Activated B cell treated with CpG ODN at 0.5 μM for 24 hours (primary cell): ENCODE measurements at regions of chr1 and their contacts with region 1.

Region 1: DNA sequence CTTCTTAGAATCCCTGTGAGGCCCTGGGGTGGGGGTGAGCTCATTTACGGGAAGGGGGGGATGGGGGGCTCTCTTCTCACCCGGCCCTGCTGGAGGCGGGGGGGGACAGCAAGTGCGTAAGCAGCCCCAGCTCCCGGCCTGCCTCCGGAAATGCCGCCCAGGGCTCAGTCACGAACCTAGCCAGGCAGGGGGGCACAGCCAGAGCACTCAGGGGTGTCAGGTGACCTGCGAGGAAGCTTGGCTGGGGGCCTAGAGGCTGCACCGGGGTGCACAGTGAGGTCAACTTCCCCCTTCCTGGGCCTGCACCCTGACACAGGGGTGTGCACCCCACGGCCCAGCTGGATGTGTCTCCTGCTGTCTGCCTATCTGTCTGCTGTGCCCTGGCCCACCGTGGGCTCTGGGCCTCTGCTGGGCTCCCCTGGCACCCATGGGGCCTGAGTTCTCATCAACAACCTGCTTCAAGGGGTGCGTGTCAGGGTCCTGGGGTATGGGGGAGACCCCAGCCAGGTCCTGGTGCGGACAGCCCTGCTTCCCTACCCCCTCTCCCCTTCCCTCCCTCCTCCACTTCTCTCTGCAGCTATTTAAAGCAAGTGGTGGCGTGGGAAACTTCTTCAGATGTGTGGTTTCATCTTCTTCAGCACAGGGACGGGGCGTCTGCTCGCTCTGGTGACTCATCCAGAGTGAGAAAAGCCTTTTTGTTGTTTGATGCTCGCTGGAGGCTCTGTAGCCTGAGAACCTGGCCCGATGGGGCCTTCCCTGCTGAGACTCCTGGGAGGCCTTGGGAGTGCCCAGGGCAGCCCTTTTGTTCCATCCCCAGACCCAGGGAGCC is 92.5 kb upstream of the RUNX3 start:
- DNase-seq: peak; percentile 84
- ATAC-seq: peak; percentile 79
- H3K4me3 Mint-ChIP-seq: peak overlapping the region; percentile 52
- H3K27ac Mint-ChIP-seq: peak overlapping the region; percentile 91
- H3K4me1 Mint-ChIP-seq: peaks cover 71% of the 10 kb centered on the region
- H3K27me3 Mint-ChIP-seq: no peaks in the 10 kb centered on the region
- CTCF ChIP-seq: no peak

Region 2: GRCh38 chr1:24955161-24955560 is 67.4 kb before region 1 on chr1:
- CTCF ChIA-PET with region 1: interaction called, 3 read pairs
- POLR2A ChIA-PET with region 1: interaction called, 47 read pairs
- intact Hi-C with region 1: loop called (anchors 1 kb)
- DNase-seq: no peak
- ATAC-seq: peak; percentile 76
- H3K4me3 Mint-ChIP-seq: peak overlapping the region; percentile 78
- H3K27ac Mint-ChIP-seq: peak overlapping the region; percentile 87
- H3K4me1 Mint-ChIP-seq: peaks cover 87% of the 10 kb centered on the region
- H3K27me3 Mint-ChIP-seq: no peaks in the 10 kb centered on the region
- CTCF ChIP-seq: no peak

Region 3: DNA sequence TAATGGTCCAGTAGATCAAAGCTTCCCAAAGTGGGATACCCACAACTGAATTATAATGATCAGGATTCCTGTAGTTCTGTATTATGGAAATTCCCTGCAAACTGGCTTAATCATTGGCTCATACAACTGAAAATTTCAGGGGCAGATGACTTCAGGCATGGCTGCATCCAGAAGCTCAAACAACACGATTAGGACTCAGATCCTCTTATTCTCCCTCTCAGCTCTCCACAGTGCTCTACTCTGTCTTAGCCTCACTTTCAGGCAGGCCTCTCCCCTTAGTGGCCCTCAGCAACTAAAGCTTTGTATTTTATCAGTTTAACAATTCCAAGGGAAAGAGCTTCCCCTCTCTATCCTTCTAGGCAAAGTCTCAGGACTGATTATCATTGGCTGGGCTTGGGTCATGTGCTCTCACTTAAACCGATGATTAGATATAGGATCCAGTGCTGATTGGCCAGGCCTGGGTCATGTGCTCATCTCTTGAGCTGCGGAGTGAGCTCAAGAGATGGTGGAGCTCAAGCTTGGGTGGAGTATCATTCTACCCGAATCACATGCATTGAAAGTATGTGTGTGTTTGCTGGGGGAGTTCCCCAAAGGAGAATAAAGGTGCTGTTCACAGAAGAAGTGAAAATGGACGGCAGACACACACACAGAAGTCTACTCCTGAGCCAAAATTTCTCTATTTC is 34.6 kb before region 1 on chr1:
- CTCF ChIA-PET with region 1: interaction called, 3 read pairs
- POLR2A ChIA-PET with region 1: interaction called, 22 read pairs
- intact Hi-C with region 1: loop called (anchors 1 kb)
- DNase-seq: no peak
- ATAC-seq: peak; percentile 92
- H3K4me3 Mint-ChIP-seq: peak overlapping the region; percentile 61
- H3K27ac Mint-ChIP-seq: peak overlapping the region; percentile 85
- H3K4me1 Mint-ChIP-seq: peaks cover 34% of the 10 kb centered on the region
- H3K27me3 Mint-ChIP-seq: no peaks in the 10 kb centered on the region
- CTCF ChIP-seq: no peak

Region 4: DNA sequence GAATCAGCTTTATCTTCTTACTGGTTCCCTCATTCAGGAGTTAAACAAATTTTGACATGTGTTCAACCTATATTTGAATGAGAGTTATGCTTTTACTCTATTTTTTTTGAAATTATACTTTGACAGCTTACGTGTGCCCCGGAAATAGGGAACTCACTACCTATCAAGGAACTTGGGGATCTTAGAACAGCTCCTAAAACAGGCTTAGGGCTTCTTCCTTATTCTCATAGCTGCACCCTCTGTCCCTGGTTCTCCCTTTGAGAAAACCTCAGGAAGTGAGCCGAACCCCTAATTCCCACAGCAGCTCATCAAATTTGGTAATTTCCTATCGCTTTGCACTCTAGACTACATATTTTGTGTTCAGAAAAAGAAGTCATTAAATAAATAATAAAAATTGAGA is 11.3 kb before region 1 on chr1:
- CTCF ChIA-PET with region 1: interaction called, 3 read pairs
- POLR2A ChIA-PET with region 1: interaction called, 10 read pairs
- intact Hi-C with region 1: no loop called
- DNase-seq: no peak
- ATAC-seq: no peak
- H3K4me3 Mint-ChIP-seq: no peak overlapping the region
- H3K27ac Mint-ChIP-seq: no peak overlapping the region
- H3K4me1 Mint-ChIP-seq: peaks cover 2% of the 10 kb centered on the region
- H3K27me3 Mint-ChIP-seq: no peaks in the 10 kb centered on the region
- CTCF ChIP-seq: no peak

Region 5: DNA sequence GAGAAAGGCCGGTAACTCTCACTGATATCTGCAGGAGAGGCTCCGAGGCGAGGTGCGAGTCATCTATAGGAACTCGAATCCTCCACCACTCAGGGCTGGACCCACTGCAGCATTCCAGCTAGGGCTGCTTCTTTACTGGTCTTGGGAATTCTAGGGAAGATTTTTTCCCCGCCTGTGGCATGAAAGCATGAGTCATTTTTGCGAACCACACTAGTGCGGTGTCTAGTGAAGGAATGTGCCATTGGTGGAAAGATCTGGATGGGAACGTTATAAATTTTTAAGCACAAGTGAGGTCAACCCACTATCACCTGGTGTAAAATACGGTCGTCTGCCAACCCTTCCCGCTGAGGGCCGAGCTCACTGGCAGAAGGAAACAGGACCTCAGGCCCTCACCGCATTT is 160.1 kb after region 1 on chr1:
- CTCF ChIA-PET with region 1: no interaction called
- POLR2A ChIA-PET with region 1: no interaction called
- intact Hi-C with region 1: no loop called
- DNase-seq: no peak
- ATAC-seq: no peak
- H3K4me3 Mint-ChIP-seq: no peak overlapping the region
- H3K27ac Mint-ChIP-seq: no peak overlapping the region
- H3K4me1 Mint-ChIP-seq: no peaks in the 10 kb centered on the region
- H3K27me3 Mint-ChIP-seq: peaks cover 16% of the 10 kb centered on the region
- CTCF ChIP-seq: no peak